HepG2 (cell line): ENCODE measurements at regions of chr11 and their contacts with region 1.

Region 1: DNA sequence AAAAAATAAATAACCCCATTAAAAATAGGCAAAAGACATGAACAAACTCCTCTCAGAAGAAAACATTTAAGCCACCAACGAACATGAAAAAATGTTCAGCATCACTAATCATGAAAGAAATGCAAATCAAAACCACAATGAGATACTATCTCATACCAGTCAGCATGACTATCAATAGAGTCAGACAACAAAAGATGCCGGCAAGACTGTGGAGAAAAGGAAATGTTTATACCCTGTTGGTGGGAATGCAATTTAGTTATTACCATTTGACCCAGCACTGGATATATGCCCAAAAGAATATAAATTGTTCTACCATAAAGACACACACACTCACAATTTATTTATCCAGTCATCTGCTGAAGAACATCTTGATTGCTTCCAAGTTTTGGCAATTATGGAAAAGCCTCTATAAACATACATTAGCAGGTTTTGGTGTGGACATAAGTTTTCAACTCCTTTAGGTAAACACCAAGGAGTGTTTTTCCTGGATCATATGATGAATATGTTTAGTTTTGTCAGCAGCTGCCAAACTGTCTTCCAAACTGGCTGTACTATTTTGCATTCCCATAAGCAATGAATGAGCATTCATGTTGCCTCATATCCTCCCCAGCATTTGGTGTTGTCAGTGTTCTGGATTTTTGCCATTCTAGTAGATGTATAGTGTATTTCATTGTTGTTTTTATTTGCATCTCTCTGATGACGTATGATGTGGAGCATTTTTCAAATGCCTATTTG is 28.0 kb downstream of the OR8D1 start:
- DNase-seq: no peak
- ATAC-seq: no peak
- H3K4me3 ChIP-seq: no peak overlapping the region
- H3K27ac ChIP-seq: no peak overlapping the region
- H3K4me1 ChIP-seq: no peaks in the 10 kb centered on the region
- H3K27me3 ChIP-seq: no peaks in the 10 kb centered on the region
- CTCF ChIP-seq: no peak
- EP300 ChIP-seq: no peak
- POLR2A ChIP-seq: no peak
- RAD21 ChIP-seq: no peak

Region 2: DNA sequence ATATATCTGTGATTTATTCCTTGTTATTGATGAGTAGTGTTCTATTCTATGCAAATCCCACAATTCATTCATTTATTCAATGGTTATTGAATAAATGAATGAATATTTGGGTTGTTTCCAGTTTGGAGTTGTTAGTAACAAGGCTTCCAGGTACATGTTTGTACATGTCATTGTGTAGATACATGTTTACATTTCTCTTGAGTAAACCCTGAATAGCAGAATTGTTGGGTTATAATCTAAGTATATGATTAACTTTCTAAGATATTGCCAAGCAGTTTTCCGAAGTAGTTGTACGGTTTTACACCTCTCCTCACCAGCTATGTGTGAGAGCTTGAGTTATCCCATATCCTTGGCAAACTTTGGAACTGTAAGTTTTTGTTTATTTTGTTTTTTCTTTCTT is 63.4 kb before region 1 on chr11:
- CTCF ChIA-PET with region 1: no interaction called
- POLR2A ChIA-PET with region 1: no interaction called
- in situ Hi-C with region 1: loop called (anchors 10 kb)
- intact Hi-C with region 1: no loop called
- DNase-seq: no peak
- ATAC-seq: no peak
- H3K4me3 ChIP-seq: no peak overlapping the region
- H3K27ac ChIP-seq: no peak overlapping the region
- H3K4me1 ChIP-seq: no peaks in the 10 kb centered on the region
- H3K27me3 ChIP-seq: no peaks in the 10 kb centered on the region; a peak in 1 of 5 replicates
- CTCF ChIP-seq: no peak
- EP300 ChIP-seq: no peak
- POLR2A ChIP-seq: no peak
- RAD21 ChIP-seq: no peak

Region 3: DNA sequence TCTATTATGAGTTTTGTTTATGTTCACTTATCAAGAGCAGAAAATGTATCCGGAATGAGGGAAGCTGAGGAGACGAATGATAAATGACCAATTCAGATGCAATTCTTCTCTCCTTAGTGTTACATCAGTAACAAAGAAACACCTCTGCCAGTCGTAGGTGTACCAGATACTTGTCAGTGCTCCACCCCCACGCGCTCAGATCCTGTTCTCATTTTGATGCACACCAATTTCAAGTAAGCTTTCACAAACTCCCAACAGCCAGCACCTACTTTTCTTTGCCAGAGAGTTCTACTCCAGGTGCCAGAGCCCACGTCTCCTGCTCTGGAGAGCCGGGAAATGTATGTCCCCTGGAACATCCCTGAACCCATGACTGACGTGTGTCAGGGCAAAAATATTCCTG is 213.9 kb after region 1 on chr11:
- CTCF ChIA-PET with region 1: no interaction called
- POLR2A ChIA-PET with region 1: no interaction called
- in situ Hi-C with region 1: no loop called
- intact Hi-C with region 1: loop called (anchors 5 kb)
- DNase-seq: no peak
- ATAC-seq: no peak
- H3K4me3 ChIP-seq: no peak overlapping the region
- H3K27ac ChIP-seq: no peak overlapping the region
- H3K4me1 ChIP-seq: no peaks in the 10 kb centered on the region
- H3K27me3 ChIP-seq: no peaks in the 10 kb centered on the region
- CTCF ChIP-seq: no peak
- EP300 ChIP-seq: no peak
- POLR2A ChIP-seq: no peak
- RAD21 ChIP-seq: no peak